ENCODE measurements at regions of chr11 and their contacts with region 1.

Region 1: DNA sequence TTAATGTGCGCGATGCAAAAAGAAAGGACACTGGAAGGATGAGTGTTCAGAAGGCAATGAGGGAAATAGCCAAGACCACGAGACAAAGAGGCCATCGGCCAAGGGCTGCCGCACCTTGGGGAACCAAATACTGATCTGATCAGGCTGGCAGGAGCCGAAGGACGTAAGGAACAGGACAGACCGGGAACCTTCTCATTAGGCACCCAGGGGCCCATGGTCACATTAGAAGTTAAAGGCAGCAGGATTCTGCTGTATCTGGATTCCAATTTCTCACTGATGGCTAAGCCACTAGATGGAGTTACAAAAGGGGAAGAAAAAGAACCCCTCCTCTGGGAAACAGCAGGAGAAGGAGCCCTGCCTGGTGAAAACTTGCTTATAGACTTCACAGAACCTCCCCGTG is 28.8 kb upstream of the CPT1A start:
- DNase-seq: no peak
- H3K4me3 ChIP-seq: peak overlapping the region; percentile 45 to 64
- H3K27ac ChIP-seq: peak overlapping the region; percentile 65 to 78
- H3K4me1 ChIP-seq: peaks cover 9 to 49% of the 10 kb centered on the region in 2 donors
- H3K27me3 ChIP-seq: no peaks in the 10 kb centered on the region
- CTCF ChIP-seq: peak in 1 of 3 experiments; percentile 25

Region 2: DNA sequence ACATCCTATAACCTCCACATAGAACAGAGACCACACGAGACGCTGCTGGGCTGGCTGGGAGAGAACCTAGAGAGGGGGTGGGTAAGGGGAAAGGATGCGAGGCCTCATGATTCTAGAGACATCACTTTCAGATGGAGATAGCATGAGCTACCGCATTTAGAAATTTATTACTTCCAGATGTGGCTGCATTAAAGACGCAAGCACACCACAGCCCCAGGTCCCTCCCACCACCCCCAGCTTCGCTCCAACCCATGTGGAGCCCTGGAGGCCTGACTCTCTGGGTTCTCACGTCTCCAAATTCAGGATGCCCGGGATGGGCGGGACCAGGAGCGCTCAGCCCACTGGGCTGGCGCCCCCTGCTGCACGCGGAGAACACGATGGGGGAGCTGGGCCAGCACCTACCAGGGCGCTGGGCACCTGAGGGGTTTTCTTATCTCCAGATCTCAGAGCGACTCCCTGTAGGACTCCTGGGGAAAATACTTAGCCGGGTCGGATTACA is 19.5 kb after region 1 on chr11:
- intact Hi-C with region 1: loop called (anchors 2 kb)
- DNase-seq: peak in 1 of 2 donors; percentile 79
- H3K4me3 ChIP-seq: no peak overlapping the region
- H3K27ac ChIP-seq: peak overlapping the region; percentile 61 to 82
- H3K4me1 ChIP-seq: peaks cover 14 to 16% of the 10 kb centered on the region in 2 donors
- H3K27me3 ChIP-seq: no peaks in the 10 kb centered on the region
- CTCF ChIP-seq: peak; percentile 68 to 75 (median 72)

Region 3: GRCh38 chr11:69075421-69076128 is 205.1 kb after region 1 on chr11:
- intact Hi-C with region 1: no loop called
- DNase-seq: peak; percentile 24 to 94
- H3K4me3 ChIP-seq: no peak overlapping the region
- H3K27ac ChIP-seq: peak overlapping the region; percentile 21 to 62
- H3K4me1 ChIP-seq: peaks cover 0 to 8% of the 10 kb centered on the region in 2 donors
- H3K27me3 ChIP-seq: no peaks in the 10 kb centered on the region
- CTCF ChIP-seq: no peak

Region 4: GRCh38 chr11:70153133-70153727 is 1282.8 kb after region 1 on chr11:
- intact Hi-C with region 1: no loop called
- DNase-seq: no peak
- H3K4me3 ChIP-seq: no peak overlapping the region
- H3K27ac ChIP-seq: no peak overlapping the region
- H3K4me1 ChIP-seq: no peaks in the 10 kb centered on the region
- H3K27me3 ChIP-seq: no peaks in the 10 kb centered on the region
- CTCF ChIP-seq: no peak